Transverse colon (tissue), 4 donors: ENCODE measurements at regions of chr22 and their contacts with region 1.

Region 1: DNA sequence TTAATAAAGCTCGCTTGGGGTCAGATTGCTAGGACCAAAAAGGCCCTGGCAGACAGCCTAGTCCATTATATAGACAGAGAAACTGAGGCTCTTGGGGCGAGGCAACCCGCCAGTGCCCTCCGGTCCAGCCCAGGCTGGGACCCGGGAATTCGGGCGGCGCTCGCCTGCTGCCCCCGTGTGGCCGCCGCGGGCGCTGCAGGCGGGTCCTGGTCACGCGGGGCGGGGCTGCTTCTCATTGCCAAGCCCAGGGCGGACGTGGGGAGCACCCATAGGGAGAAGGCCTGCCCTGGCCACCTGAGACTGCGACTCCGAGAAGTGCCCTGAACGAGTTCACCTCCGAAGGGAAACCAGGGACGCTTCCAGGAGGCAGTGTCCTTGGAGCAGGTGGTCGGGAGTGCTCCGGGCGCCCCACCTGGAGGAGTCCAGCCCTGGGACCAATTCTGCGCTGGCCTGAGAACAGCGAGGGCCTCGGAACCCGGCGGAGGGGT is 36.0 kb upstream of the CSNK1E start:
- DNase-seq: peak; percentile 77
- H3K4me3 ChIP-seq: no peak overlapping the region
- H3K27ac ChIP-seq: no peak overlapping the region
- H3K4me1 ChIP-seq: peaks cover 0 to 8% (median 5%) of the 10 kb centered on the region in 4 donors
- H3K27me3 ChIP-seq: no peaks in the 10 kb centered on the region
- CTCF ChIP-seq: peak; percentile 94 to 99 (median 99)
- EP300 ChIP-seq: no peak
- POLR2A ChIP-seq: no peak

Region 2: DNA sequence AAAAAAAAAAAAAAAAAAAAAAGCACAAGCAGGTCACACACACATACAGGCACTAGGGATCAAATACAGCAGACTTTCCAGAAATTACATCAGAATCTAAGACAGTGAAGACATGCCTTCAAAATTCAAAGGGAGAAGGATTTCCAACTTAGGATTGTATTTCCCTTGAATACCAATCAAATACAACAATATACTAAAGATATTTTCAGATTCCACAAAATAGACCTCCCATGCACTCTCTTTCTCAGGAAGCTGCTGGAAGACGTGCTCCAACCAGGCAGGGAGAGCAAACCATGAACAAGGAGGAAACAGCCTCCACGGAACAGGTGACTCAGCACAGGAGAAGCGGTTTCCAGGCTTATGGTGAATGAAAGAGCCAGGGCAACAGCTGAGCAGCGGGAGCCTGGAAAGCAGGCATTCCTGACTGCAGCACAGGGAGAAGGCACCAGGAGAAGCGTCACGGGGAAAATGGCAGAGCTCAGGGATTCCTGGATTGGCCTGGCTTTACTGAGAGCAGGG is 112.4 kb before region 1 on chr22:
- in situ Hi-C with region 1: no loop called
- intact Hi-C with region 1: no loop called
- DNase-seq: peak; percentile 59
- H3K4me3 ChIP-seq: no peak overlapping the region
- H3K27ac ChIP-seq: peak overlapping the region; percentile 32 to 60 (median 43)
- H3K4me1 ChIP-seq: peaks cover 19 to 68% (median 42%) of the 10 kb centered on the region in 4 donors
- H3K27me3 ChIP-seq: no peaks in the 10 kb centered on the region
- CTCF ChIP-seq: no peak
- EP300 ChIP-seq: no peak
- POLR2A ChIP-seq: no peak

Region 3: GRCh38 chr22:38262051-38262795 is 91.0 kb before region 1 on chr22:
- in situ Hi-C with region 1: loop called in 2 of 4 experiments (anchors 10 kb)
- intact Hi-C with region 1: no loop called
- DNase-seq: peak; percentile 78
- H3K4me3 ChIP-seq: no peak overlapping the region
- H3K27ac ChIP-seq: peak overlapping the region; percentile 80 to 88 (median 88)
- H3K4me1 ChIP-seq: peaks cover 32 to 69% (median 61%) of the 10 kb centered on the region in 4 donors
- H3K27me3 ChIP-seq: no peaks in the 10 kb centered on the region
- CTCF ChIP-seq: peak; percentile 59 to 66 (median 63)
- EP300 ChIP-seq: no peak
- POLR2A ChIP-seq: no peak